ENCODE measurements at regions of chr15 and their contacts with region 1.

Region 1: DNA sequence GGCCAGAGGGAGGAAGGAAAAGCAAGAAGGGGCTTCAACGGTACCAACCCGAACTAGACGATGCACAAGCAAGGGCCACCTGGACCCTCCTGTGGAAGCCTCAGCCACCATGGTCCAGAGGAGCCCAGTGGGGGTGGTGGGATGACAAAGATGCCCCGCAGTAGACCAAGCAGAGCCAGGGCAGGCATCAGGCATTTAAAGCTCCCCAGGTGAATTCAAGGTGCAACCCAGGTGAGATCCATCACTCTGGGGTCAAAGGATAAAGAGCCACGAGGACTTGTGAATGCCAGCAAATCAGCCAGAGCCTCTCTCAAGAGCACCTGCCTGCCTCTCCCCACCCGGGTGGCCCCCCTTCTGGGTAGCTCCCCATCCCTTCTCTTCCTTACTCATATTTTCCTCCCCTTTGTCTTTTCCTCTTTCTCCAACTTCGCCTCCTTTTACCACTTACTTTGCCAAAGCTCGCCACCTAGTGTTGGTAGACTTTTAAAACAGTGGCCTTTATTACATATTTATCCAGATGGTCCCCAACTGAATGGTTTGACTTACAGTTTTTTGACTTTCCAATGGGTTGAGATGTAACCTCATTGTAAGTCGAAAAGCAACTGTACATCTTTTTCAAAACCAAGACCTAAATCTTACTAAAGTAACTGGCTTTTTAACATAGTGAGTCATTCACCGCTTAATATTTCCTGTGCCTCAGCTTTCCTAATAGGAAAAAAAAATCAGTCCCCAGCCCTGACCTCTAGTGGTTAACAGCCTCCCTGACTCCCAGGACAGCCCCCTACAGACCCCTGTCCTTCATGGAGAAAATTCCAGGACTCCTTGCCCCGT is 18.8 kb downstream of the PLA2G4F start:
- DNase-seq: peak; percentile 43 to 47
- ATAC-seq: peak; percentile 68 to 77; a peak in 4 of 6 replicates
- H3K4me3 ChIP-seq: no peak overlapping the region
- H3K27ac ChIP-seq: no peak overlapping the region
- H3K4me1 ChIP-seq: peaks cover 25% of the 10 kb centered on the region
- CTCF ChIP-seq: peak; percentile 60
- EP300 ChIP-seq: no peak
- POLR2A ChIP-seq: no peak
- RAD21 ChIP-seq: peak; percentile 60 to 64

Region 2: GRCh38 chr15:42065033-42065432 is 72.6 kb before region 1 on chr15:
- CTCF ChIA-PET with region 1: interaction called, 15 read pairs
- POLR2A ChIA-PET with region 1: no interaction called
- DNase-seq: no peak
- ATAC-seq: peak in 1 of 2 experiments; percentile 26; a peak in 1 of 6 replicates
- H3K4me3 ChIP-seq: no peak overlapping the region
- H3K27ac ChIP-seq: no peak overlapping the region
- H3K4me1 ChIP-seq: no peaks in the 10 kb centered on the region; the same call in 2 of the 3 replicates
- CTCF ChIP-seq: no peak
- EP300 ChIP-seq: no peak
- POLR2A ChIP-seq: no peak
- RAD21 ChIP-seq: no peak

Region 3: GRCh38 chr15:42338500-42338899 is 200.9 kb after region 1 on chr15:
- CTCF ChIA-PET with region 1: no interaction called
- POLR2A ChIA-PET with region 1: no interaction called
- DNase-seq: no peak
- ATAC-seq: no peak
- H3K4me3 ChIP-seq: no peak overlapping the region
- H3K27ac ChIP-seq: no peak overlapping the region
- H3K4me1 ChIP-seq: no peaks in the 10 kb centered on the region
- CTCF ChIP-seq: no peak
- EP300 ChIP-seq: no peak
- POLR2A ChIP-seq: no peak
- RAD21 ChIP-seq: no peak

Measured in A549 (cell line).